ENCODE measurements at regions of chr1 and their contacts with region 1.

Region 1: GRCh38 chr1:11037740-11038182 is 9.3 kb downstream of the MASP2 start:
- DNase-seq: peak; percentile 51
- ATAC-seq: peak; percentile 99
- H3K4me3 ChIP-seq: no peak overlapping the region
- H3K27ac ChIP-seq: no peak overlapping the region
- H3K4me1 ChIP-seq: no peaks in the 10 kb centered on the region
- H3K27me3 ChIP-seq: no peaks in the 10 kb centered on the region
- CTCF ChIP-seq: peak; percentile 96 to 99 (median 98); a peak in 5 of 6 replicates
- EP300 ChIP-seq: no peak
- POLR2A ChIP-seq: no peak
- RAD21 ChIP-seq: peak; percentile 99

Region 2: GRCh38 chr1:11053758-11054137 is 16.0 kb after region 1 on chr1:
- CTCF ChIA-PET with region 1: interaction called, 15 read pairs
- POLR2A ChIA-PET with region 1: no interaction called
- RAD21 ChIA-PET with region 1: interaction called, 9 read pairs
- SMC1A ChIA-PET with region 1: interaction called, 17 read pairs
- in situ Hi-C with region 1: no loop called
- intact Hi-C with region 1: no loop called
- DNase-seq: no peak
- ATAC-seq: peak; percentile 32; the same call in 2 of the 3 replicates
- H3K4me3 ChIP-seq: no peak overlapping the region
- H3K27ac ChIP-seq: no peak overlapping the region
- H3K4me1 ChIP-seq: peaks cover 12% of the 10 kb centered on the region
- H3K27me3 ChIP-seq: no peaks in the 10 kb centered on the region
- CTCF ChIP-seq: no peak
- EP300 ChIP-seq: no peak
- POLR2A ChIP-seq: peak; percentile 4; the same call in 1 of the 2 replicates
- RAD21 ChIP-seq: no peak

Region 3: GRCh38 chr1:11078631-11079030 is 40.9 kb after region 1 on chr1:
- CTCF ChIA-PET with region 1: interaction called, 57 read pairs
- POLR2A ChIA-PET with region 1: no interaction called
- RAD21 ChIA-PET with region 1: interaction called, 52 read pairs
- SMC1A ChIA-PET with region 1: interaction called, 35 read pairs
- in situ Hi-C with region 1: no loop called
- intact Hi-C with region 1: no loop called
- DNase-seq: no peak
- ATAC-seq: no peak
- H3K4me3 ChIP-seq: no peak overlapping the region
- H3K27ac ChIP-seq: no peak overlapping the region
- H3K4me1 ChIP-seq: no peaks in the 10 kb centered on the region; the same call in none of the 2 replicates
- H3K27me3 ChIP-seq: no peaks in the 10 kb centered on the region
- CTCF ChIP-seq: no peak
- EP300 ChIP-seq: no peak
- POLR2A ChIP-seq: no peak
- RAD21 ChIP-seq: no peak

Region 4: DNA sequence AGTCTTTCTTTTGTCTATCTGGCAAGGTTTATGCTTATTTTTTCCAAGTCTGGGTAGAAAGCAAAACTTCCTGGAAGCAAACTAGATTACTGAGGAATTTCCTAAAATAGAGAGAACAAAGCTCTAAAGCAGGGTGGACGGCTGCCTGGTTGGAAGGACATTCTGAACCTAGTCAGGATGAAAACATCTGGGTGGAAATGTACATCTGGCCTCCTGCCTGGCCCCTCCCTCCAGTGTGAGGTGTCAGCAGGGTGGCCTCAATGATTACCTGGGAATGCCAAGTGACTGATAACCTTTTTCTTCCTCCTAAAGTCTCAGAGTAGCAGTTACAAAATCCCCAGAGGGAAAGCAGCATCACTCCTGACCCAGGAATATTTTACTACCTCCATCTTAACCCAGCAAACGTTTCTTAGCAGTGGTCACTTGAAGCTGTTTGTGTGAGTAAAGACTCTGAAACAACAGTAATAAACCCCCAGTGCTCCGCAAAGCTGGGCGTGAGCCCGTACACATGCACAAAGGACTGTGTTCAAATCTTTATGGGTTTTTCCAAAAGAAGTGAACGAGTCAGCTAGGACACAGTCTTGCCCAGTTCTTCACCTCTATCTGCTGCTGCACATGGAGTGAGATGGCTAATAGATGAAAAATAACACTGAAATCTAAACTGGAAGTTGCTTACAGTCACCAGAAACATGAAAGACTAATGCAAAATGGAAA is 170.3 kb after region 1 on chr1:
- CTCF ChIA-PET with region 1: interaction called, 17 read pairs
- POLR2A ChIA-PET with region 1: no interaction called
- RAD21 ChIA-PET with region 1: interaction called, 3 read pairs
- SMC1A ChIA-PET with region 1: interaction called, 4 read pairs
- in situ Hi-C with region 1: no loop called
- intact Hi-C with region 1: no loop called
- DNase-seq: no peak
- ATAC-seq: no peak
- H3K4me3 ChIP-seq: no peak overlapping the region
- H3K27ac ChIP-seq: no peak overlapping the region
- H3K4me1 ChIP-seq: no peaks in the 10 kb centered on the region
- H3K27me3 ChIP-seq: no peaks in the 10 kb centered on the region
- CTCF ChIP-seq: no peak
- EP300 ChIP-seq: no peak
- POLR2A ChIP-seq: no peak
- RAD21 ChIP-seq: no peak

Region 5: GRCh38 chr1:11237356-11237755 is 199.6 kb after region 1 on chr1:
- CTCF ChIA-PET with region 1: interaction called, 35 read pairs
- POLR2A ChIA-PET with region 1: no interaction called
- RAD21 ChIA-PET with region 1: interaction called, 21 read pairs
- SMC1A ChIA-PET with region 1: interaction called, 15 read pairs
- in situ Hi-C with region 1: no loop called
- intact Hi-C with region 1: loop called (anchors 1 kb)
- DNase-seq: no peak
- ATAC-seq: no peak
- H3K4me3 ChIP-seq: no peak overlapping the region
- H3K27ac ChIP-seq: no peak overlapping the region
- H3K4me1 ChIP-seq: peaks cover 3% of the 10 kb centered on the region; the same call in 1 of the 2 replicates
- H3K27me3 ChIP-seq: no peaks in the 10 kb centered on the region
- CTCF ChIP-seq: no peak
- EP300 ChIP-seq: no peak
- POLR2A ChIP-seq: no peak
- RAD21 ChIP-seq: no peak

Region 6: DNA sequence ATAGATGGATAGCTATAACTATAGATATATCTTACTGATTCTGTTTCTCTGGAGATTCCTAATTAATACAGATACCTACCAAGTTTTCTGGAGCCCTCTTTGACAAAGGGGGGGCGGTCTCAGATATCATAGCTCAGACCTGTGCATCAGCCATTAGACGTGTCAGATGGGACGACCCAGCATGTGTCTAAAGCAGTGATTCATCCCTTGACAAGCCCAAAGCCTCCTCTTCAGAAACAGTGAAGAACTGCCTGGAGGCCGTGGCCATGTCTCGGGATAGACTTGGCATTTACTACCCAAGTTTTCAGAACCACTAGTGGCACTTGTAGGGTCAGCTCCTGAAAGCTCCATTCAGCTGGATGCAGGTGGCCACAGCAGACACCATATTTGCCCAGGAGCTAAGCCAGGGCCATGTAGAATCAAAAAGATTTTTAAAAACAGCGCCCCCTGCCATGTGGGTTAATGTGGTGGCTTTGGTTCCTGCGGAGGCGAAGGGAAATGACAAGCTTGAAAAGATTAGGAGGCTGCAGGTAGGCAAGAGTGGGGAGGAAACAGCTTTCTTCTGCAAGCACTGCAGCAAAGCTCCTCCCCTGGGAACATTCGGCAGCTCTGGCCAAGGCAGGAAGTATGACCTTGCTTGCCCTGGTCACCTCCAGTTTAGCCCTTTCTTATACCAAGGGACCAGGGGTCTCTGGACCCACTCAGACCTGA is 534.3 kb after region 1 on chr1:
- CTCF ChIA-PET with region 1: interaction called, 11 read pairs
- POLR2A ChIA-PET with region 1: no interaction called
- RAD21 ChIA-PET with region 1: no interaction called
- SMC1A ChIA-PET with region 1: interaction called, 4 read pairs
- in situ Hi-C with region 1: no loop called
- intact Hi-C with region 1: no loop called
- DNase-seq: no peak
- ATAC-seq: 0 out of 3 replicates have a peak, but pooled peaks have one; percentile 26
- H3K4me3 ChIP-seq: no peak overlapping the region
- H3K27ac ChIP-seq: no peak overlapping the region
- H3K4me1 ChIP-seq: no peaks in the 10 kb centered on the region
- H3K27me3 ChIP-seq: no peaks in the 10 kb centered on the region
- CTCF ChIP-seq: peak in 2 of 3 experiments; percentile 12 to 34; a peak in 3 of 6 replicates
- EP300 ChIP-seq: no peak
- POLR2A ChIP-seq: no peak
- RAD21 ChIP-seq: no peak

Measured in GM12878 (cell line).